ENCODE measurements at regions of chrX and their contacts with region 1.

Region 1: DNA sequence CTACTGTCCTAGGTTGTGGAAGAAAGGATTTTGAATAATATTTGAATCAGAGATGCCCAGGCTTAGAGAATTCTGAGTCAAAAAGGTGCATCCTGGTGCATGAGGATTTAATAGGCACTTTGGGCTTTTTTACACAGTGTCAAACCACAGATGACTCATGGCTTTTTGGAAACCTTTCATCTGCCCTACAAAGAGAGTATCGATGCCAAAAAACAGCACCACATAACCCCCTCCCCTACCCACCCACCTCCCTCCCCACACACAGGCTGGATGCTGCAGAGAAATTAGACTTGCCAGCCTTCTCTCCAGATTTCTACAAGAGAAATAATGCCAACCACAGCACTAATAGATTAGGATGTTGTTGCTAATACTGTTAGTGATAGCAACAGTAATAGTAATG is 779.3 kb downstream of the NLGN4X start:
- DNase-seq: no peak
- H3K4me3 ChIP-seq: no peak overlapping the region
- H3K27ac ChIP-seq: no peak overlapping the region
- H3K4me1 ChIP-seq: no peaks in the 10 kb centered on the region
- H3K27me3 ChIP-seq: no peaks in the 10 kb centered on the region
- CTCF ChIP-seq: no peak
- POLR2A ChIP-seq: no peak

Region 2: DNA sequence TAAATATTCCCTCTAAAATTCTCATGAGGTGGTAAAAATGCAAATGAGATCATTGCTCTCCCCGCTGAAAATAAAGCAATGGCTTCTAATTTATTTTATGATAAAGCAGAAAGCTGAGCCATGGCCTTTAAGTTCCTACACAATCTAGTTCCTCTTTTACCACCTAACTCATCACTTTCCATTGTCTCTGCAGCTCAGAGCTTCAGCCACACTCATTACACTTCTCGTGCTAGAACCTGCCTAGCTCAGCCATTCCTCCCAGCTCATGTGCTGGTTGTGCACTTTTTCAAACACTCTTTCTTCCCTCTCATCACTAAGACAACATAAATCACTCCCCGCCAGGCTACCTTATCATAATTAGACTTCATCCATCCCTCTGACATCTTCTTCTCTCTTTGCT is 623.8 kb before region 1 on chrX:
- intact Hi-C with region 1: no loop called
- DNase-seq: no peak
- H3K4me3 ChIP-seq: no peak overlapping the region
- H3K27ac ChIP-seq: no peak overlapping the region
- H3K4me1 ChIP-seq: no peaks in the 10 kb centered on the region
- H3K27me3 ChIP-seq: no peaks in the 10 kb centered on the region
- CTCF ChIP-seq: no peak
- POLR2A ChIP-seq: no peak

Region 3: GRCh38 chrX:5388087-5388486 is 61.2 kb before region 1 on chrX:
- intact Hi-C with region 1: loop called (anchors 10 kb)
- DNase-seq: no peak
- H3K4me3 ChIP-seq: no peak overlapping the region
- H3K27ac ChIP-seq: no peak overlapping the region
- H3K4me1 ChIP-seq: no peaks in the 10 kb centered on the region
- H3K27me3 ChIP-seq: no peaks in the 10 kb centered on the region
- CTCF ChIP-seq: no peak
- POLR2A ChIP-seq: no peak